CD4-positive, alpha-beta T cell (primary cell): ENCODE measurements at regions of chr17 and their contacts with region 1.

Region 1: DNA sequence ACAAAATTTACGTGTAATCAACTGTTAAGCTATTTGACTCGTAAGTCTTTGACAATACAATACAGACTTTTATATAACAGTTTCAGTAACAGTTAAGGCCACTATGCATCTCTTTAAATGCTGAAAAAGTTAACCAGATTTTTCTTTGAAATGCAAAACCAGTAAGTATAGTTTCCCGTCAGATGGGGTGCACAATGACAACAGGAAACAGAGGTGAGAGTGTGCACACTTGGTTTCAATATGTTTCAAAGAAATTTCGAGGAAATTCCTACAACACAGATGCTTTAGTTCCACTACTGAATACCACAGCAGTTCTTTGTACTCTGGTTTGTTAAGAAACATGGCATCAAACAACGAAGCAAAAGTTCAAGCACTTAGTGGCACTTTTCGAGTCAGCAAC is 48.4 kb downstream of the RNF157 start:
- DNase-seq: peak in 7 of 14 experiments; percentile 26 to 92 (median 60)
- ATAC-seq: peak; percentile 81
- H3K4me3 ChIP-seq: peak overlapping the region; percentile 11
- H3K4me3 Mint-ChIP-seq: peak overlapping the region; percentile 65
- H3K27ac ChIP-seq: peak overlapping the region; percentile 73 to 79
- H3K27ac Mint-ChIP-seq: peak overlapping the region; percentile 93
- H3K4me1 ChIP-seq: peaks cover 93% of the 10 kb centered on the region
- H3K4me1 Mint-ChIP-seq: peaks cover 72% of the 10 kb centered on the region
- H3K27me3 ChIP-seq: no peaks in the 10 kb centered on the region
- H3K27me3 Mint-ChIP-seq: no peaks in the 10 kb centered on the region
- CTCF ChIP-seq: no peak

Region 2: GRCh38 chr17:76141212-76142038 is 50.5 kb before region 1 on chr17 and contains the start of gene FOXJ1:
- CTCF ChIA-PET with region 1: no interaction called
- POLR2A ChIA-PET with region 1: interaction called, 10 read pairs
- intact Hi-C with region 1: no loop called
- DNase-seq: peak; percentile 83 to 97 (median 92)
- ATAC-seq: peak; percentile 64
- H3K4me3 ChIP-seq: peak within 1 kb of the TSS; percentile 51
- H3K4me3 Mint-ChIP-seq: peak within 1 kb of the TSS; percentile 87
- H3K27ac ChIP-seq: no peak within 1 kb of the TSS
- H3K27ac Mint-ChIP-seq: peak within 1 kb of the TSS; percentile 97
- H3K4me1 ChIP-seq: peaks cover 68% of the 10 kb centered on the region
- H3K4me1 Mint-ChIP-seq: peaks cover 60% of the 10 kb centered on the region
- H3K27me3 ChIP-seq: peaks cover 8 to 11% of the 10 kb centered on the region in 2 experiments
- H3K27me3 Mint-ChIP-seq: peaks cover 10% of the 10 kb centered on the region
- CTCF ChIP-seq: no peak
- total RNA-seq, gene FOXJ1: 0.63 to 0.89 TPM

Region 3: GRCh38 chr17:76153640-76154039 is 38.3 kb before region 1 on chr17:
- CTCF ChIA-PET with region 1: no interaction called
- POLR2A ChIA-PET with region 1: interaction called, 15 read pairs
- intact Hi-C with region 1: no loop called
- DNase-seq: no peak
- ATAC-seq: no peak
- H3K4me3 ChIP-seq: no peak overlapping the region
- H3K4me3 Mint-ChIP-seq: peak overlapping the region; percentile 30
- H3K27ac ChIP-seq: peak overlapping the region; percentile 24 to 72
- H3K27ac Mint-ChIP-seq: peak overlapping the region; percentile 99
- H3K4me1 ChIP-seq: peaks cover 35% of the 10 kb centered on the region
- H3K4me1 Mint-ChIP-seq: peaks cover 50% of the 10 kb centered on the region
- H3K27me3 ChIP-seq: no peaks in the 10 kb centered on the region
- H3K27me3 Mint-ChIP-seq: no peaks in the 10 kb centered on the region
- CTCF ChIP-seq: no peak

Region 4: DNA sequence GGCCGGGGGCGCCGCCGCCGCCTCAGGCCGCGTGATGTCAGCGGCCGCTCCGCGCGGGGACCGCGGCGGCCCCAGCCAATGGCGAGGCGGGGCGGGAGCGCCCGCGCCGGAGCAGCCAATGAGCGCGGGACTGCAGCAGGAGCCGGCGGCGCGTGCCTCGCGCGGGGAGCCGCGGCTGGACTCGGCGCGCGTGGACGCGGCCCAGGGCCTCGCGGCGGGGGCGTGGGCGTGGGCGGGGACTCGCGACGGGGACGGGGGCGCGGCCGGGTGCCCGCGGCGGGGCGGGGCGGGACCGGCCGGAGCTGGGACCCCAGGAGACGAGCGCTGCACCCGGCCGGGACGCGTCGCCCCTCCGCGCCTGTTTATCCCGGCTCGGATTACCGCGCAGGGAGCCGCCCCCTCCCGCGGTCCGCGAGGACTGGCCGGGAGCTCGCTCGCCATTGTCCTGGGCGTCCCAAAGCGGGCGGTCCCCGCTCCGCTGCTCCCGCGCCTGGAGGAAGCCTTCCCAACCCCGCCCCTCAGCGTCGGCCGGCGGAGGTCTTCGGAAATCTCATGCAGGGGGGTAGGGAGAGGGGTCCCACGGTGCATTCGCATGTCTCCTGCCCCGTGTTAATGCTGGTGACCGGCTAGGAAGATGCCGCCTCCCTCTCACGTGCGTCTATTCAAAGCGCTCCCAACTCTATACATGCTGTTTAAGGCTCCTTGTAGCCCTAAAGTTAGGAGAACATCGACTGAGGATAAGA is 48.7 kb after region 1 on chr17 and contains the start of gene RNF157:
- CTCF ChIA-PET with region 1: no interaction called
- POLR2A ChIA-PET with region 1: interaction called, 17 read pairs
- intact Hi-C with region 1: loop called (anchors 5 kb)
- DNase-seq: peak; percentile 39 to 90 (median 64)
- ATAC-seq: peak; percentile 91
- H3K4me3 ChIP-seq: peak within 1 kb of the TSS; percentile 86
- H3K4me3 Mint-ChIP-seq: peak within 1 kb of the TSS; percentile 89
- H3K27ac ChIP-seq: peak within 1 kb of the TSS; percentile 35 to 36
- H3K27ac Mint-ChIP-seq: peak within 1 kb of the TSS; percentile 77
- H3K4me1 ChIP-seq: peaks cover 66% of the 10 kb centered on the region
- H3K4me1 Mint-ChIP-seq: peaks cover 54% of the 10 kb centered on the region
- H3K27me3 ChIP-seq: no peaks in the 10 kb centered on the region
- H3K27me3 Mint-ChIP-seq: no peaks in the 10 kb centered on the region
- CTCF ChIP-seq: no peak
- total RNA-seq, gene RNF157: 18.5 to 21.1 TPM

Region 5: GRCh38 chr17:76246080-76247066 is 54.5 kb after region 1 on chr17:
- CTCF ChIA-PET with region 1: no interaction called
- POLR2A ChIA-PET with region 1: interaction called, 17 read pairs
- intact Hi-C with region 1: loop called in 1 of 2 experiments (anchors 5 kb)
- DNase-seq: peak in 9 of 14 experiments; percentile 19 to 75 (median 44)
- ATAC-seq: peak; percentile 89
- H3K4me3 ChIP-seq: no peak overlapping the region
- H3K4me3 Mint-ChIP-seq: peak overlapping the region; percentile 81
- H3K27ac ChIP-seq: peak overlapping the region; percentile 33 to 62
- H3K27ac Mint-ChIP-seq: peak overlapping the region; percentile 86
- H3K4me1 ChIP-seq: peaks cover 69% of the 10 kb centered on the region
- H3K4me1 Mint-ChIP-seq: peaks cover 56% of the 10 kb centered on the region
- H3K27me3 ChIP-seq: no peaks in the 10 kb centered on the region
- H3K27me3 Mint-ChIP-seq: no peaks in the 10 kb centered on the region
- CTCF ChIP-seq: no peak

Region 6: DNA sequence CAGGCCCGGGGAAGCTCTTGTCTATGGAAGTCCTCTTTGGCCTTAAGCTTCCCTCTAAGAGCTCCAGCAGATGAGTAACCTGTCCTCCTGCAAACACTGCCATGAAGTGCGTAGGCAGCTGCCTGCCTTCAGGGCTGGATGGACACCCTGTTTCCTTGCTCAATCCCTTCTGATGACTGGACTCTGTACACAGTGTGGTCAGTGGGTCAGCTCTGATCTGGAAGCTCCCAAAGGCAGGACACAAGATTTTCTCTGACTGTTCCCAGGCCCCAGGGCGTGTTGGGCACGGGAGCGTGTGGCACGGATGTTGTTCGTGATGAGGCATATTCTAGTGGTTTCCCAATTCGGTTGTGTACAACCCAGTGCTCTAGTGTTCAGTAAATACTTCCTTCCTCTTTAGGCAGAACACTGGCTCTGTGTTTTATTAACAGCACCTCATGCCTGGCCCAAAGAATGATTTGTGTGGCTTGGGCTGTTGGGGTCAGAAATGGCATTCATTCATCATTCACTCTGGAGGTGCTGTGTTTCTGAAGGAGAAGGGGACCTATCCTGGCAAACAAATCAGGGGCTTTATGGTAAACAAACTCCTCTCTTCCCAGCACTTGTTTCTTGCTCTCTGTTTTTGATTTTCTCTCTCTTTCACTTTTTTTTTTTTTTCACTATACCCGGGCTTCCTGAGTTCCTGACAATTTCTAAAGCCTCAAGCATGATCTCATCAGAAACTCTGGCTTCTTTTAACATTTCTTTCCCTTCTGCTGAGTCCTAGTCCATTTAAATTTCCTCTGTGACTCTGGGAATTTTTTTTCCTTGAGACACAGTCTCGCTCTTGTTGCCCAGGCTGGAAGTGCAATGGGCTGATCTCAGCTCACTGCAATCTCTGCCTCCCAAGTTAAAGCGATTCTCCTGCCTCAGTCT is 60.4 kb after region 1 on chr17:
- CTCF ChIA-PET with region 1: interaction called, 3 read pairs
- POLR2A ChIA-PET with region 1: interaction called, 22 read pairs
- intact Hi-C with region 1: no loop called
- DNase-seq: peak in 7 of 14 experiments; percentile 26 to 80 (median 63)
- ATAC-seq: peak; percentile 76
- H3K4me3 ChIP-seq: peak overlapping the region; percentile 6
- H3K4me3 Mint-ChIP-seq: peak overlapping the region; percentile 79
- H3K27ac ChIP-seq: peak overlapping the region; percentile 47 to 82
- H3K27ac Mint-ChIP-seq: peak overlapping the region; percentile 87
- H3K4me1 ChIP-seq: peaks cover 68% of the 10 kb centered on the region
- H3K4me1 Mint-ChIP-seq: peaks cover 61% of the 10 kb centered on the region
- H3K27me3 ChIP-seq: no peaks in the 10 kb centered on the region
- H3K27me3 Mint-ChIP-seq: no peaks in the 10 kb centered on the region
- CTCF ChIP-seq: no peak

Region 7: GRCh38 chr17:76278952-76279741 is 87.3 kb after region 1 on chr17:
- CTCF ChIA-PET with region 1: interaction called, 11 read pairs
- POLR2A ChIA-PET with region 1: interaction called, 221 read pairs
- intact Hi-C with region 1: no loop called
- DNase-seq: peak; percentile 74 to 91 (median 84)
- ATAC-seq: peak; percentile 89
- H3K4me3 ChIP-seq: no peak overlapping the region
- H3K4me3 Mint-ChIP-seq: no peak overlapping the region
- H3K27ac ChIP-seq: no peak overlapping the region
- H3K27ac Mint-ChIP-seq: no peak overlapping the region
- H3K4me1 ChIP-seq: peaks cover 31% of the 10 kb centered on the region
- H3K4me1 Mint-ChIP-seq: peaks cover 13% of the 10 kb centered on the region
- H3K27me3 ChIP-seq: no peaks in the 10 kb centered on the region
- H3K27me3 Mint-ChIP-seq: no peaks in the 10 kb centered on the region
- CTCF ChIP-seq: peak; percentile 98

Region 8: DNA sequence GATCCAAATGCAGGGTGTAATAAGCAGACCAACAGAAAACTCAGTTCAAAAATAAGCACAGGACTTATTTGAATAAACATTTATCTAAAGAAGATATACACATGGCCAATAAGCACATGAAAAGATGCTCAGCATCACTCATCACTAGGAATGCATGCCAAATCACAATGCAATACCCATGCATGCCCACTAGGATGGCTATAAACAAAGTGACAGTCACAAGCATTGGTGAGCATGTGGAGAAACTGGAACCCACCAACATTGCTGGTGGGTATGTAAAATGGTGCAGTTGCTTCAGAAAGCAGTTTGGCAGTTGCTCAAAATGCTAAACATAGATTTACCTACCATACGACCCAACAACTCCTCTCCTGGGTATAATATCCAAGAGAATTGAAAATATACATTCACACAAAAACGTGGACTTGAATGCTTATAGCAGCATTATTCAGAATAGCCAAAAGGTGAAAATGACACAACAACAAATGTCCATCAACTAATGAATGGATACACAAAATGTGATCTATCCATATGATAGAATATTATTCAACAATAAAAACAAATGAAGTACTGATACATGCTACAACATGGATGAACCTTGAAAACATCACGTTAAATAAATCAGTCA is 240.9 kb after region 1 on chr17:
- CTCF ChIA-PET with region 1: no interaction called
- POLR2A ChIA-PET with region 1: no interaction called
- intact Hi-C with region 1: no loop called
- DNase-seq: peak in 1 of 14 experiments; percentile 20
- ATAC-seq: peak; percentile 52
- H3K4me3 ChIP-seq: no peak overlapping the region
- H3K4me3 Mint-ChIP-seq: no peak overlapping the region
- H3K27ac ChIP-seq: no peak overlapping the region
- H3K27ac Mint-ChIP-seq: no peak overlapping the region
- H3K4me1 ChIP-seq: no peaks in the 10 kb centered on the region
- H3K4me1 Mint-ChIP-seq: peaks cover 29% of the 10 kb centered on the region
- H3K27me3 ChIP-seq: no peaks in the 10 kb centered on the region
- H3K27me3 Mint-ChIP-seq: no peaks in the 10 kb centered on the region
- CTCF ChIP-seq: peak; percentile 40